ENCODE measurements at regions of chr19 and their contacts with region 1.

Region 1: GRCh38 chr19:12052497-12053169 is at the start of gene ZNF878:
- DNase-seq: peak; percentile 82
- H3K4me3 ChIP-seq: peak within 1 kb of the TSS; percentile 81
- H3K27ac ChIP-seq: no peak within 1 kb of the TSS
- H3K4me1 ChIP-seq: peaks cover 9% of the 10 kb centered on the region
- CTCF ChIP-seq: peak; percentile 59
- total RNA-seq, gene ZNF878: 0.72 and 1.0 TPM in 2 replicates

Region 2: GRCh38 chr19:11881151-11881800 is 171.4 kb before region 1 on chr19:
- CTCF ChIA-PET with region 1: no interaction called
- POLR2A ChIA-PET with region 1: no interaction called
- intact Hi-C with region 1: loop called (anchors 2 kb)
- DNase-seq: peak; percentile 72
- H3K4me3 ChIP-seq: no peak overlapping the region
- H3K27ac ChIP-seq: no peak overlapping the region
- H3K4me1 ChIP-seq: no peaks in the 10 kb centered on the region
- CTCF ChIP-seq: peak; percentile 83